Psoas muscle (tissue), 8 donors: ENCODE measurements at regions of chr6 and their contacts with region 1.

Region 1: GRCh38 chr6:85642774-85643536 is at the start of gene SYNCRIP:
- DNase-seq: peak; percentile 99 to 100
- ATAC-seq: peak; percentile 82 to 89 (median 84)
- H3K4me3 ChIP-seq: peak within 1 kb of the TSS; percentile 87
- H3K27ac ChIP-seq: peak within 1 kb of the TSS; percentile 97
- H3K4me1 ChIP-seq: peaks cover 40% of the 10 kb centered on the region
- H3K27me3 ChIP-seq: no peaks in the 10 kb centered on the region
- CTCF ChIP-seq: no peak
- total RNA-seq, gene SYNCRIP: 59.1 to 122 (median 96.1) TPM

Region 2: DNA sequence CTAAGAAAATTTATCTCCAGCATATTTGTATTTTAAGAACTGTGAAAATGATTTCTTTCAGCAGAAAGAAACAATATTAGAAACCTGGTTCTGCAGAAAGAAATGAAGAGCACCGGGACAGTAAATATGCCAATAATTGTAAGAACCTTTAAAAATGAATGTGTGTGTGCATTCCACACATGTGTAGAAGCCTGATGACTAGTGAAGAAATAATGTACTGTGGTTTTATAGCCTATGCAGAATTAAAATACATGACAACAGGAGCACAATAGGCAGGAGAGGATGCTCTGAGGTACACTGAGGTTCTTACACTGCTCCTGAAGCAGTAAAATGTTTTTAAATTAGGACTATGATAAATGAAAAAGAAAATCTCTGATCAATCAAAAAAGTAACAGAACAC is 98.2 kb before region 1 on chr6:
- intact Hi-C with region 1: no loop called
- DNase-seq: no peak
- ATAC-seq: no peak
- H3K4me3 ChIP-seq: no peak overlapping the region
- H3K27ac ChIP-seq: no peak overlapping the region
- H3K4me1 ChIP-seq: no peaks in the 10 kb centered on the region
- H3K27me3 ChIP-seq: no peaks in the 10 kb centered on the region
- CTCF ChIP-seq: no peak

Region 3: GRCh38 chr6:85593438-85594196 is 49.3 kb before region 1 on chr6 and contains the start of gene SNX14:
- intact Hi-C with region 1: loop called (anchors 2 to 5 kb)
- DNase-seq: peak; percentile 97 to 98
- ATAC-seq: peak; percentile 95 to 97 (median 96)
- H3K4me3 ChIP-seq: peak within 1 kb of the TSS; percentile 87
- H3K27ac ChIP-seq: peak within 1 kb of the TSS; percentile 92
- H3K4me1 ChIP-seq: peaks cover 15% of the 10 kb centered on the region
- H3K27me3 ChIP-seq: no peaks in the 10 kb centered on the region
- CTCF ChIP-seq: no peak
- total RNA-seq, gene SNX14: 13.4 to 17.5 (median 14.6) TPM

Region 4: DNA sequence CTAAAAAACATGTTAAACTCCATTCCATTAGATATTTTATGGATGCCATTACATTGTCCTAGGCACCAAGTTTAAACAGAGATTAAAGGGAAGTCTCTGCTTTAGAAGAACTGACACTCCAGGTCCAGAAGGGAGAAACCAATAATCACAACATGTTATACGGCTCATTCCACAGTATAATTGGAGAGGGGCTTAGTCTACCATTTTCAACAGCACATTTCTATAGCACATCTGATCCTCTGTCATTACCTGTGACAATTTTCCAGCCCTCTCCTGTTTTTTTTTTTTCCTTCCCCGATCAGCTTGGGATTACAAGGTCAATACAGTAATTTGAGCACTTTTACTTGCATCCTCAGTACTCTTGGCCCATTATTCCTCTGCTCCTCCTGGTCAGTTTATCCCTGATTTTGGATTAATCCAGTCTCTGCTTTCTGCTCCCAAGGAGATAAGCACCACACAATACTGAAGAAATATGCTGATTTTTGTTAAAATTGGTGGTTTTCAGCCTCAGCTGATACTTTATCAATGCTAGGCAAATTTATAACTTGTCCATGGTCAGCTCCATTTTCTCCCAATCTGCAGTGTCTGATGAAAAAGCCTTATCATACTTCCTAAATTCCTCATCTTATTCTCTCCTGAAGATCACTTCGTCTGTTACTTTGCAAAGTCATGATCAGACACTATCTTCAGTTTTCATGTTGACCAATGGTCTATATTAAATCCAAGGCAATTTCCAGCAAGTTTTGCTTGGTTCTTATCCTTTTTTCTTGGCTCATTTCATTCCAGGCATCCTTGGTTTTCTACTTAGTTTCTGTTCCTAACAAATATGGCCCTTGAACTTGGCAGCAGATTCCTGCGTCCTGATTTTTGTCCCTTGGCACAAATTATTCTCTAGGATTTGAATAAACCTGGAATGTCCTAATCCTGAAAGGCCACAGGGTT is 30.5 kb after region 1 on chr6:
- intact Hi-C with region 1: loop called (anchors 1 to 2 kb)
- DNase-seq: no peak
- ATAC-seq: no peak
- H3K4me3 ChIP-seq: peak overlapping the region; percentile 94
- H3K27ac ChIP-seq: peak overlapping the region; percentile 97
- H3K4me1 ChIP-seq: peaks cover 28% of the 10 kb centered on the region
- H3K27me3 ChIP-seq: no peaks in the 10 kb centered on the region
- CTCF ChIP-seq: no peak

Region 5: GRCh38 chr6:85678602-85679444 is 35.9 kb after region 1 on chr6:
- intact Hi-C with region 1: loop called (anchors 1 to 2 kb)
- DNase-seq: peak; percentile 98 to 99
- ATAC-seq: peak; percentile 89 to 95 (median 91)
- H3K4me3 ChIP-seq: peak overlapping the region; percentile 94
- H3K27ac ChIP-seq: peak overlapping the region; percentile 97
- H3K4me1 ChIP-seq: peaks cover 23% of the 10 kb centered on the region
- H3K27me3 ChIP-seq: no peaks in the 10 kb centered on the region
- CTCF ChIP-seq: peak; percentile 5